ENCODE measurements at regions of chr1 and their contacts with region 1.

Region 1: GRCh38 chr1:40951943-40952743 is 27.4 kb upstream of the CTPS1 start:
- DNase-seq: no peak
- H3K4me3 ChIP-seq: no peak overlapping the region
- H3K27ac ChIP-seq: no peak overlapping the region
- H3K27me3 ChIP-seq: no peaks in the 10 kb centered on the region
- CTCF ChIP-seq: peak; percentile 89

Region 2: DNA sequence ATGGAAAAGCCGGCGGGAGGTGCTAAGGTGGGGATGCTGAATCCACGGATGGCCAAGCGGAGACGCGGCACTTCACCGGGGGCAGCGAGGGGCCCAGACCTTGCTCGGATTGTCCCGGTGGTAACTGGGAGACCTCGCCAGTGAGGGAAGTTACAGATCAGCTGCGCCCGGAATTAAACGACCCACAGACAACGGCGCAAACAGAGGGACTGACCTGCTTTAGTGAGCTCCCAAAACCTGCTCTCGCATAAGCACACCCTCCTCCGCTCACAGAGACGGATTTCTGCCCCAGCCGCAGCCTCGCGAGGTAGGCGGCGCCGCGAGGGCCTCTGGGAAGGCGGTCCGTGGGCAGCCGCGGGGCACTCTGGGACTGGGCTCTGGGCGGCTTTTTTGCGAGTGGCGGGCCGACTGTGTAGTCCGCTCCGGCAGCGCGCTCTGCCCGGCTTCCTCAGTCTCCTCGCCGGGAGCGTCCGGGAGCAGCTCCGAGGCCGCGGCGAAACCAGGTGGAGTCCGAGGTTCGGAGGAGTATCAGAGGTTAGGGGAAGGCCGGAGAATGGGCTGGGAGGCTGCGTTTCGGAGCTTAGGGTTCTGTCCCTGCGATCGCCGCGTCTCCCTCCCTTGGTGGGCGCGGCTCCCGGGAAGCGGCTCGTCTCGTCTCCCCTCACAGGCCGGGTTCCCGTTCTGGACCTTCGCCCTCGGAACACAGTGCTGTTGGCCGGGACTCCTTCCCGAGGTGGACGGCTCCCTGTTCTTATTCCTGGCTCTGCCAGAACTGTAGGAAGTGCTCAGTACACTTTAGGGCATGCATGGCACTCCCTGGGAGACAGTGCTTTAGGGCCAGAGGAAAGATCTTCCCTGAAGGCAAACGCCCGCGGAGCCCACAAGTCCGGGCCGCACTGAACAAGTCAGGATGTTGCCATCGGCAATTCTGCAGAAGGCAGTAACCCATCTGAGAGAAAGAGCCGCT is 443.5 kb before region 1 on chr1 and contains the start of gene EXO5:
- CTCF ChIA-PET with region 1: no interaction called
- POLR2A ChIA-PET with region 1: no interaction called
- DNase-seq: no peak
- H3K4me3 ChIP-seq: peak within 1 kb of the TSS; percentile 82
- H3K27ac ChIP-seq: peak within 1 kb of the TSS; percentile 75
- H3K27me3 ChIP-seq: no peaks in the 10 kb centered on the region
- CTCF ChIP-seq: no peak
- polyA plus RNA-seq, gene EXO5: 8.3 and 11.1 TPM in 2 replicates

Region 3: GRCh38 chr1:40531381-40532061 is 420.6 kb before region 1 on chr1 and contains the start of gene ZNF684:
- CTCF ChIA-PET with region 1: interaction called, 11 read pairs
- POLR2A ChIA-PET with region 1: no interaction called
- DNase-seq: peak; percentile 85
- H3K4me3 ChIP-seq: peak within 1 kb of the TSS; percentile 89
- H3K27ac ChIP-seq: peak within 1 kb of the TSS; percentile 77
- H3K27me3 ChIP-seq: no peaks in the 10 kb centered on the region
- CTCF ChIP-seq: no peak
- polyA plus RNA-seq, gene ZNF684: 2.3 and 3.2 TPM in 2 replicates

Region 4: GRCh38 chr1:40862008-40862863 is 89.9 kb before region 1 on chr1 and contains the start of gene CITED4:
- CTCF ChIA-PET with region 1: interaction called, 442 read pairs
- POLR2A ChIA-PET with region 1: interaction called, 9 read pairs
- DNase-seq: peak; percentile 74
- H3K4me3 ChIP-seq: peak within 1 kb of the TSS; percentile 64
- H3K27ac ChIP-seq: no peak within 1 kb of the TSS
- H3K27me3 ChIP-seq: peaks cover 9% of the 10 kb centered on the region
- CTCF ChIP-seq: peak; percentile 28
- polyA plus RNA-seq, gene CITED4: 0.53 and 0.98 TPM in 2 replicates

Region 5: GRCh38 chr1:40877698-40878097 is 74.4 kb before region 1 on chr1:
- CTCF ChIA-PET with region 1: interaction called, 19 read pairs
- POLR2A ChIA-PET with region 1: interaction called, 3 read pairs
- DNase-seq: peak; percentile 51
- H3K4me3 ChIP-seq: no peak overlapping the region
- H3K27ac ChIP-seq: peak overlapping the region; percentile 65
- H3K27me3 ChIP-seq: no peaks in the 10 kb centered on the region
- CTCF ChIP-seq: no peak

Region 6: GRCh38 chr1:40939320-40940059 is 12.7 kb before region 1 on chr1:
- CTCF ChIA-PET with region 1: interaction called, 109 read pairs
- POLR2A ChIA-PET with region 1: interaction called, 7 read pairs
- DNase-seq: peak; percentile 8
- H3K4me3 ChIP-seq: no peak overlapping the region
- H3K27ac ChIP-seq: no peak overlapping the region
- H3K27me3 ChIP-seq: no peaks in the 10 kb centered on the region
- CTCF ChIP-seq: no peak

Region 7: GRCh38 chr1:41024953-41025352 is 72.8 kb after region 1 on chr1:
- CTCF ChIA-PET with region 1: no interaction called
- POLR2A ChIA-PET with region 1: no interaction called
- DNase-seq: no peak
- H3K4me3 ChIP-seq: no peak overlapping the region
- H3K27ac ChIP-seq: no peak overlapping the region
- H3K27me3 ChIP-seq: no peaks in the 10 kb centered on the region
- CTCF ChIP-seq: no peak

Measured in AG04450 (cell line).